ENCODE measurements at regions of chr3 and their contacts with region 1.

Region 1: DNA sequence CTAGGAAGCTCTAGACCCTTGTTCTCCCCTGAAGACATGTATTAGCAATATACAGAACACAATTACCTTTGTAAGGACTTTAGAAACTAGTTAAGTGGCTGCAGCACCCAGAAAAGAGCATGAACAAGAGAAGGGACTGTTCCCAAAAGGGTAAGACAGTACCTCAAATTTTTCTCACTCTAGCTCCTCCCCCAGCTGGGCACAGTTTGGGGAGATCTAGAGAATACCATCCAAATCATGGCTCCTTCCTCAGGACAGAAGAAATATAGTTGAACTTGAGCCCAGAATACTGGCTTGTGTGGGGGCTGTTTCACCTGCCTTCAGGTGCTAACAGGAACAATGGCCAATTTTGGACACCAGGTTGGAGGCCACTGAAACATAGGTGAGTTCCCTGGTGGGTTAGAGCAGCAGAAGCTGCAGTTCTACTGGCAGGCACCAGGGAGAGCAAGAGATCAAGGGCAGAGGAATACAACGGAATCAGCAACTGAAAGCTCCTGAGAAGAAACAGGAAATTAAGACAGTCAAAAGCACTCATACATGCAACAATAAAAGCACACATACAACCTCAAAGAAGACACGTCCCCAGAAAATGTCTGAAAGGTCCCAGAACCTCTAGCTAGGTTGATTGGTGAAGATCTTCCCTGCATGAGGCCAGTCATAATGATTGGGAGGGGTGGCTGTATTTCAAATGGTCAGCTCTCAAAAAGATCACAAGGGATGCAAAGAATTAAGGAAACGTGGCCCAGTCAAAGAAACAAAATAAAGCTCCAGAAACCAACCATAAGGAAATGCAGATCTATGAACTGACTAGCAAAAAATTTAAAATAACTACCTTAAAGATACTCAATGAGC is 104.9 kb upstream of the ASB14 start:
- DNase-seq: peak; percentile 74
- H3K4me3 Mint-ChIP-seq: peak overlapping the region; percentile 30
- H3K27ac Mint-ChIP-seq: no peak overlapping the region
- H3K4me1 Mint-ChIP-seq: peaks cover 6% of the 10 kb centered on the region
- H3K27me3 Mint-ChIP-seq: peaks cover 64% of the 10 kb centered on the region
- CTCF ChIP-seq: peak; percentile 90

Region 2: GRCh38 chr3:57409456-57409855 is 12.1 kb after region 1 on chr3:
- CTCF ChIA-PET with region 1: interaction called, 13 read pairs
- POLR2A ChIA-PET with region 1: no interaction called
- intact Hi-C with region 1: no loop called
- DNase-seq: no peak
- H3K4me3 Mint-ChIP-seq: no peak overlapping the region
- H3K27ac Mint-ChIP-seq: no peak overlapping the region
- H3K4me1 Mint-ChIP-seq: no peaks in the 10 kb centered on the region
- H3K27me3 Mint-ChIP-seq: peaks cover 12% of the 10 kb centered on the region
- CTCF ChIP-seq: no peak

Region 3: GRCh38 chr3:57434041-57434440 is 36.6 kb after region 1 on chr3:
- CTCF ChIA-PET with region 1: interaction called, 9 read pairs
- POLR2A ChIA-PET with region 1: no interaction called
- intact Hi-C with region 1: loop called (anchors 1 kb)
- DNase-seq: peak; percentile 69
- H3K4me3 Mint-ChIP-seq: no peak overlapping the region
- H3K27ac Mint-ChIP-seq: no peak overlapping the region
- H3K4me1 Mint-ChIP-seq: no peaks in the 10 kb centered on the region
- H3K27me3 Mint-ChIP-seq: peaks cover 26% of the 10 kb centered on the region
- CTCF ChIP-seq: peak; percentile 48

Region 4: GRCh38 chr3:57582474-57583168 is 185.2 kb after region 1 on chr3:
- CTCF ChIA-PET with region 1: interaction called, 7 read pairs
- POLR2A ChIA-PET with region 1: no interaction called
- intact Hi-C with region 1: loop called (anchors 2 kb)
- DNase-seq: peak; percentile 89
- H3K4me3 Mint-ChIP-seq: peak overlapping the region; percentile 19
- H3K27ac Mint-ChIP-seq: peak overlapping the region; percentile 46
- H3K4me1 Mint-ChIP-seq: peaks cover 10% of the 10 kb centered on the region
- H3K27me3 Mint-ChIP-seq: no peaks in the 10 kb centered on the region
- CTCF ChIP-seq: peak; percentile 11

Region 5: DNA sequence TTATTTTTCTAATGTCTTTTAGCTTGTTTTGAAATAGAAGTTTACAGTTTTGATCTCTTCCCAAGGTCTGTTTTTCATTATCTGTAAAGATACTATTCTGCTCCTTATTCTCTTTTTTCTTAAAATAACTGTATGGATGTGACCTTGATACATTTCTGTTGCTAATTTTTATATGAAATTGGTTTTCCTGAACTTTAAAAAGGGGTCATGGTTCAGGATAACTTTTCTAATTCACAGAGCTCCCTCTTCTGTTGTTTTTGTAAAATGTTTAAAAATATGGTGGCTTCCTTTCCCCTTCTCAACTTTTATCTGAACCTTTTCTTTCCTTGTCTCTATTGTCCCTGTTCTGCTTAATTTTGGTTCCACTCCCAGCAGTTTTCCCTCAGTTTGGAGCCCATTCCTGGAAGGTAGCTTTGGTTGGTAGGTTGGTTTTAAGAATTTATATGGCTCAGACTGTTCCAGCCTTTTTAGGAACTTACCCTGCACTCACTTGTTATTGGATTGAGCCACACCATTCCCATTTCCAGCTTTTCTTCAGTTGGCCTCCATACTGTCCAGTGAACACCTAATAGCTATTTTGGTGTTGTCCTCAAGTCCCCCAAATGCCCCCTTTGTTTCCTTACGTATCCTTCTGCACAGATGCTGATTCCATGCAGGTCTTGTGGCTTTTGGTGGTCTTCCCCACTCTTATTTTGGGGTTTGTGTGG is 429.0 kb after region 1 on chr3:
- CTCF ChIA-PET with region 1: no interaction called
- POLR2A ChIA-PET with region 1: no interaction called
- intact Hi-C with region 1: loop called (anchors 1 kb)
- DNase-seq: no peak
- H3K4me3 Mint-ChIP-seq: no peak overlapping the region
- H3K27ac Mint-ChIP-seq: peak overlapping the region; percentile 40
- H3K4me1 Mint-ChIP-seq: peaks cover 18% of the 10 kb centered on the region
- H3K27me3 Mint-ChIP-seq: no peaks in the 10 kb centered on the region
- CTCF ChIP-seq: peak; percentile 49

Measured in MCF 10A (cell line).